ENCODE measurements at regions of chr6 and their contacts with region 1.

Region 1: DNA sequence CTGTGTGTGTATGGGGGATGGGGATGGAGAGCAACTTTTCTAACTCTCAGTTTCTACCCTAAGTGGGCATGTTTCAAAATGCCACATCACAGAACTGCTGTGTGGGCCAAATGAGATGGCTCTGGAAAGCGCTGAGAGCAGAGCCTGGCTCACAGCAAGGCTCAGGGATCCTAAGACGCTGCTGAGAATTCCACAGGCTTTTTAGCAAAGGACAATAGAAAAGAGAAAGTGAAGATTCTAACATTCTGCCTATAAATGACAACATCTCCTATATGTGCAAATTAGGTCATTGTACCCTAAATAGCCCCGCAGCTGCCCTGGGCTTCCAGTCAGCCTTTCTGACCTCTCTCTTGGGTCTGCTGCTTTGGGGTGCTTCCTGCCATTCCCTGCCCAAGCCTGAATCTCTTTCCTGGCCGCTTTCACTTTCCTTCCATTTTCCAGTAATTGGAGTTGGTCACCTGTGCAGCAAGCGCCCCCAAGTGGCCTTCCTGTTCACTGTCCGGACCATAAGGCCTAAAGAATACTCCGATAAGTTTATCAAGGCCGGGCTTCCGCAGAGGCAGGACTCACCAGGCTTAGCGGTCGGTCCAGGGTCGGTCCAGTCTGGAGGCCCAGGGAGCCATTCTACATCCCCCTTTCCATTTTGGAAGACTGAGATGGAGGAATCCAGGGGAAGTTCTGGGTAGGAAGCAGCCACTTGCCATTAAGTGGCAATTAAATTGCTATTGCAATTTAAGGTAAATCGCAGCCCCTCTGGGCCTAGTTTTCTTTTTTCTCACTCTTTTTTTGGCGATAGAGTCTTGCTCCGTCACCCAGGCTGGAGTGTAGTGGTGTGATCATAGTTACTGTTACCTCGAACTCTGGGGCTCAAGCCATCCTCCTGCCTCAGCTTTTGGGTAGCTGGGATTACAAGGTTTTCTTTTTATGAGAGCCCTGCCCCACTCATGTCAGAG is 6.6 kb upstream of the DDR1 start:
- DNase-seq: peak; percentile 91
- H3K4me3 ChIP-seq: peak overlapping the region; percentile 22 to 27
- H3K27ac ChIP-seq: peak overlapping the region; percentile 77 to 88
- H3K4me1 ChIP-seq: peaks cover 18% of the 10 kb centered on the region
- H3K27me3 ChIP-seq: no peaks in the 10 kb centered on the region
- CTCF ChIP-seq: peak; percentile 77 to 96 (median 92)
- POLR2A ChIP-seq: peak; percentile 29

Region 2: DNA sequence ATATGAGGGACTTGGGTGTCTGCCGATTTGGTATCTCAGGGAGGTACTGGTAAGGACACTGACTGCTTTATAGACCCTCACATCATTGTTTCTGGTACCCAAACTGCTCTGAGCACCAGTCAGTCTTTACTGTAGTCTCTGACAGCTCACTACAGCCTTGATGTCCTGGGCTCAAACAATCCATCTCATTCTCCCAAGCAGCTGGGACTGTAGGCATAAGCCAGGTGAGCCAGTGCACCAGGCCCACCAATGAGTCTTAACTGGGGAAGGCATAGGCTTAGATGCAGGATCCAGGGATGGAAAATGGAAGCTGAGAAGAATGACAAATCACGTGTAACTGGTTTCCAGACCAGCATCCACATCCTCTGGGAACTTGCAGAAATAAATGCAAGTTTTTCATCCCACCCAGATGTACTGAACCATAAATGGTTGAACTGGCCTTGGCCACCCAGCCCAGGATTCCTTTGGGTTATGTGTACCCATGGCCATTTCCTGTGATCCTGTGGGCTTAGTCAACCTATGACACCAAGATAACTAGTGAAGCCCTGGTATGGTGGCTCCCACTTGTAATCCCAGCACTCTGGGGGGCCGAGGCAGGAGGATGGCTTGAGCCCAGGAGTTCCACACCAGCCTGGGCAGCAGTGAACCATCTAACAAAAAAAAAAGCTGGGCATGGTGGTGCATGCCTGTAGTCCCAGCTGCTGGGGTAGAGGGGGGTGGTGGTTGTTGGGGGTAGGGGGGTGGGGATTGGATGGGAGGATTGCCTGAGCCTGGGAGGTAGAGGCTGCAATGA is 151.8 kb before region 1 on chr6:
- intact Hi-C with region 1: loop called (anchors 5 kb)
- DNase-seq: no peak
- H3K4me3 ChIP-seq: no peak overlapping the region
- H3K27ac ChIP-seq: no peak overlapping the region
- H3K4me1 ChIP-seq: peaks cover 10% of the 10 kb centered on the region
- H3K27me3 ChIP-seq: no peaks in the 10 kb centered on the region
- CTCF ChIP-seq: no peak
- POLR2A ChIP-seq: no peak

Region 3: DNA sequence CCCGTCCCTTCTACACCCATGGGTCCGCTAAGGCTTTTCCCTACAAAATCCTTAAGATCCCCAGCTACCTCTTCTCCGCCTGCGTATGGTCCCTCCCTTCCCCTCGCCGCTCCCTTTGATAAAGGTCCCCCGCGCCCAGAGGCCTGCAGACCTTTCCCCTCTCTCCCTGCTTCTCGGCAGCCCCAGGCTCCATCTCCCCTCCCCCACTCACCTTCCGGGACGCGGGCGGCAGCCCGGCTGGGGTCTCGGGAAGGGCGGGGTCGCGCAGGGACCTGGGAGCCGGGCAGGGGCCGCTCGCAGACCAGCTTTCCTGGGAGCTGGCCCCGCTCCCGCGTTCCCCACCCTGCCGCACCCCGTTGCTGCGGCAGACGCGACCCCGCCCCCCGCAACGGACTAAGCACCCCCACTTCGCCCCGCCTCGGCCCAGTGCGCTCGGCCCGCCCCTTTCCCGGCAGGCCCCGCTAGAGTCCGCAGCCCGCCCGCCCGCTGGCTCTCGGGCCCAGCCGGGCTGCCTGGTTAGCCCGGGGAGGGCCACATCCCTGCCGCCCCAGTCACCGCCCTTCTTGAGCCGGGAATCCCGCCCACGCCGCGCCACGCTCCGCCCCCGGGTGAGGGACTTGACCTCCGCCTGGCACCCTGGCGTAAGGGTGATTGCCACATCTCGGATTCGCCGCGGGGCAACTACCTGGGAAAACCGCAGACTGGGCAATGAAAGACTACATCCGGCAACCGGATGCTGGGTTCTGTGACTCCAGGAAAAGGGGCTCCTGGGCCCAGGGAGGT is 135.2 kb before region 1 on chr6 and contains the start of gene FLOT1:
- intact Hi-C with region 1: loop called (anchors 5 kb)
- DNase-seq: peak; percentile 98
- H3K4me3 ChIP-seq: peak within 1 kb of the TSS; percentile 76 to 79
- H3K27ac ChIP-seq: peak within 1 kb of the TSS; percentile 95
- H3K4me1 ChIP-seq: no peaks in the 10 kb centered on the region
- H3K27me3 ChIP-seq: no peaks in the 10 kb centered on the region
- CTCF ChIP-seq: peak in 1 of 4 experiments; percentile 10
- POLR2A ChIP-seq: peak; percentile 82
- total RNA-seq, gene FLOT1: 117 to 133 TPM

Measured in prostate gland (tissue), 2 donors.